ENCODE measurements at regions of chr13 and their contacts with region 1.

Region 1: GRCh38 chr13:43005460-43006236 is 13.6 kb upstream of the EPSTI1 start:
- DNase-seq: peak; percentile 52
- H3K4me3 Mint-ChIP-seq: peak overlapping the region; percentile 36
- H3K27ac Mint-ChIP-seq: peak overlapping the region; percentile 88
- H3K4me1 Mint-ChIP-seq: peaks cover 43% of the 10 kb centered on the region
- H3K27me3 Mint-ChIP-seq: no peaks in the 10 kb centered on the region
- CTCF ChIP-seq: no peak

Region 2: DNA sequence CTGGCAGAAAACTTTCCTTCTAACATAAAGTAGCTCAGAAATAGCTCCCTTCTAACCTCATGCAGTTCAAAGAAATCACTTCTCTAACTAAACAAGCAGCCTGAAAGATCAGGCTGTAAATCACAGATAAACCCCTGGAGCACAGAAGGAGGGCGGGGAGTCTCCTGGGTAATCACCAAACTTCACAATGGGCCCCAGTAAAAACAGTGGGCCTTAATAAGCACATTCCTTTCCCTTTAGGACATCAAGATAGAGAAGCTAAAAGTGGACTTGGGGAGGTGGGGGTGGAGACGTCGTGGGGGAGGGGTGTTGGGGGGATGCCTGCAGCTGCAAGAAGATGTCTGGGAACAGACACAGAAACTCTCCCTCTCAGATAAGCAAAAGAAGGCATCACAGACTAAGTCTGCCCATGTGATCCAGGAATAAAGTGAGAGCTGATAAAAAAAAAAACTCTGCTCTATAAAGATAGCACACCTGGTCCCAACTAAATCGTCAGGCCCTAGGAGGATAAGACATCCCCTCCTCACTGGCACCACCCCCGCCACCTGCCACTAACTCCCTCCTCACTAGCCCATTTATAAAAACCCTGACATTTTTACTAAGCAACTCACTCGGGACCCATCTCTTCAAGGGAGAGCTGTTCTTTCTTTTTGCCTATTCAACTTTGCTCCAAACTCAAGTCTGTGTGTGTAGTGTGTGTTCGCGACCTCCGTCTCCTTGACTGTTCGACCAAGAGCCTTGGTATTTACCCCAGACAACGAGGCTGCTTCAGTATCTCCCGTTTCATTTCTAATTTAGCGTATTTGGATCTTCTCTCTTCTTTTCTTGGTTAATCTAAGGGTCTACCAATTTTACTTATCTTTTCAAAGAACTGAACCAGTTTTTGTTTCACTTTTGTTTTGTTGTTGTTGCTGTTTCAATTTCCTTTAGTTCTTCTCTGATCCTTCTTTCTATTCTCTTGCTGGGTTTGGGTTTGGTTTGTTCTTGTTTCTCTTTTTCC is 49.5 kb after region 1 on chr13:
- CTCF ChIA-PET with region 1: interaction called, 6 read pairs
- POLR2A ChIA-PET with region 1: interaction called, 12 read pairs
- intact Hi-C with region 1: no loop called
- DNase-seq: peak; percentile 45
- H3K4me3 Mint-ChIP-seq: no peak overlapping the region
- H3K27ac Mint-ChIP-seq: no peak overlapping the region
- H3K4me1 Mint-ChIP-seq: peaks cover 34% of the 10 kb centered on the region
- H3K27me3 Mint-ChIP-seq: no peaks in the 10 kb centered on the region
- CTCF ChIP-seq: no peak

Region 3: GRCh38 chr13:43143591-43143990 is 137.9 kb after region 1 on chr13:
- CTCF ChIA-PET with region 1: no interaction called
- POLR2A ChIA-PET with region 1: no interaction called
- intact Hi-C with region 1: no loop called
- DNase-seq: no peak
- H3K4me3 Mint-ChIP-seq: no peak overlapping the region
- H3K27ac Mint-ChIP-seq: no peak overlapping the region
- H3K4me1 Mint-ChIP-seq: peaks cover 2% of the 10 kb centered on the region
- H3K27me3 Mint-ChIP-seq: no peaks in the 10 kb centered on the region
- CTCF ChIP-seq: no peak